ENCODE measurements at regions of chr2 and their contacts with region 1.

Region 1: GRCh38 chr2:42928692-42929545 is 136.5 kb upstream of the HAAO start:
- DNase-seq: peak; percentile 82 to 93 (median 91)
- H3K4me3 ChIP-seq: no peak overlapping the region
- H3K27ac ChIP-seq: peak overlapping the region; percentile 91 to 93
- H3K4me1 ChIP-seq: peaks cover 20 to 98% (median 97%) of the 10 kb centered on the region in 4 experiments
- H3K27me3 ChIP-seq: no peaks in the 10 kb centered on the region

Region 2: DNA sequence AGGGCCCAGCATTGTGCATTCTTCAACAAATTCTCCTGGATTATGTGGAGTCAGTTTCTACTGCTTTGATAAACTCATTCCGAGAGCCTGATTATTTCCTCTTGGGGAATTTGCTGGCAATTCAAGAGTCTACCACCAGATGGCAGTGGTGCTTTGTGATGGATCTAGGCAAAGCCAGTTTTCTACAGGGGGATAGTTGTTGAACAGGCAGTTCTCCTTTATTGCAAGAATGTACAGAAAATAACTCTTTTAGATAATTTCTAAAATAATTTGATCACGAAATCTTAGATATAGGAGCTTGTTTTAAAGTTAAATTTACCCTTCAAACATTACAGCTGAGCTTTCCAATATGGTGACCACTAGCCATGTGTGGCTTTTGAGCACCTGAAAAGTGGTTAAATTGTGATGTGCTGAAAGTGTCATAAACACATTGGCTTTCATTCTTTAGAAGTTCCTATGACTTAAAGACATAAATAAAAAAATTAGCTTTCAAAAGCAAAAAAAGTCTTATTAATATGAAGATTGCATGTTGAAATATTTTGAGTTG is 69.8 kb before region 1 on chr2:
- CTCF ChIA-PET with region 1: interaction called, 16 read pairs
- POLR2A ChIA-PET with region 1: interaction called, 3 read pairs
- DNase-seq: peak; percentile 84 to 93 (median 89)
- H3K4me3 ChIP-seq: no peak overlapping the region
- H3K27ac ChIP-seq: no peak overlapping the region
- H3K4me1 ChIP-seq: peaks cover 2 to 57% (median 45%) of the 10 kb centered on the region in 4 experiments
- H3K27me3 ChIP-seq: no peaks in the 10 kb centered on the region

Region 3: GRCh38 chr2:42901076-42901640 is 27.8 kb before region 1 on chr2:
- CTCF ChIA-PET with region 1: interaction called, 12 read pairs
- POLR2A ChIA-PET with region 1: no interaction called
- DNase-seq: no peak
- H3K4me3 ChIP-seq: no peak overlapping the region
- H3K27ac ChIP-seq: no peak overlapping the region
- H3K4me1 ChIP-seq: peaks cover 0 to 54% (median 28%) of the 10 kb centered on the region in 4 experiments
- H3K27me3 ChIP-seq: no peaks in the 10 kb centered on the region

Region 4: GRCh38 chr2:42906557-42907411 is 22.1 kb before region 1 on chr2:
- CTCF ChIA-PET with region 1: interaction called, 12 read pairs
- POLR2A ChIA-PET with region 1: interaction called, 3 read pairs
- DNase-seq: peak in 2 of 3 donors; percentile 40 to 63
- H3K4me3 ChIP-seq: peak overlapping the region in 1 of 7 experiments; percentile 46
- H3K27ac ChIP-seq: no peak overlapping the region
- H3K4me1 ChIP-seq: peaks cover 0 to 68% (median 35%) of the 10 kb centered on the region in 4 experiments
- H3K27me3 ChIP-seq: no peaks in the 10 kb centered on the region

Region 5: DNA sequence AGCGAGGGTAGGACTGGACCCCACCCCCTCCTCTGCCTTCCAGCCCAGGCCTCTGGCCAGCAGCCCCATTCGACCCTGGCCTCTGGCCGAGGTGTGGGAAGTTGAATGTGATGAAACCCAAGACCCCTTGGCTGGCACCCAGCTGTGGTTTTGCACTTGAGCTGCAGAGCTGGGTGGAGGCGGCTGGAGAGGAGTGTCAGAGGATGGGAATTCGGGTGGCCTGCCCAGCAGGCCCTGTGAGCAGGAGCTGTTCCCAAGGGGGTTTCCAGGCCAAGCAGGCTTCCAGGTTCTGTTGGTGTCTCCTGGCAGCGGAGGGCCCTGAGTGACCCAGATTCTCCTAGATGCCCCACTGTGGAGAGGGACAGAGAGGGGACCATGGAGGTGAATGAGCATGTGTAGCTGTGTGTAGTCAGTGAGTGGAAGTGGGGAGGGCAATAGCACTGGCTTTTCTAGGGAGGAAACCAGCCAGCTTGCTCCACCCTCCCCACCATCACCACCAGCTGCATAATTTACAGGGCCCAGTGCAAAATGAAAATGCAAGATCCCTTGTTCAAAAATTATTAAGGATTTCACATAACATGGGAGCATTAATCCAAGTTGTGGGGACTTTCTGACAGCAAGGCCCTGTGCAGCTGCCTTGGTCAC is 35.6 kb after region 1 on chr2:
- CTCF ChIA-PET with region 1: interaction called, 6 read pairs
- POLR2A ChIA-PET with region 1: interaction called, 12 read pairs
- DNase-seq: peak in 2 of 3 donors; percentile 65 to 69
- H3K4me3 ChIP-seq: peak overlapping the region in 2 of 7 experiments; percentile 35 to 58
- H3K27ac ChIP-seq: peak overlapping the region; percentile 88 to 91
- H3K4me1 ChIP-seq: peaks cover 35 to 99% (median 95%) of the 10 kb centered on the region in 4 experiments
- H3K27me3 ChIP-seq: no peaks in the 10 kb centered on the region

Region 6: DNA sequence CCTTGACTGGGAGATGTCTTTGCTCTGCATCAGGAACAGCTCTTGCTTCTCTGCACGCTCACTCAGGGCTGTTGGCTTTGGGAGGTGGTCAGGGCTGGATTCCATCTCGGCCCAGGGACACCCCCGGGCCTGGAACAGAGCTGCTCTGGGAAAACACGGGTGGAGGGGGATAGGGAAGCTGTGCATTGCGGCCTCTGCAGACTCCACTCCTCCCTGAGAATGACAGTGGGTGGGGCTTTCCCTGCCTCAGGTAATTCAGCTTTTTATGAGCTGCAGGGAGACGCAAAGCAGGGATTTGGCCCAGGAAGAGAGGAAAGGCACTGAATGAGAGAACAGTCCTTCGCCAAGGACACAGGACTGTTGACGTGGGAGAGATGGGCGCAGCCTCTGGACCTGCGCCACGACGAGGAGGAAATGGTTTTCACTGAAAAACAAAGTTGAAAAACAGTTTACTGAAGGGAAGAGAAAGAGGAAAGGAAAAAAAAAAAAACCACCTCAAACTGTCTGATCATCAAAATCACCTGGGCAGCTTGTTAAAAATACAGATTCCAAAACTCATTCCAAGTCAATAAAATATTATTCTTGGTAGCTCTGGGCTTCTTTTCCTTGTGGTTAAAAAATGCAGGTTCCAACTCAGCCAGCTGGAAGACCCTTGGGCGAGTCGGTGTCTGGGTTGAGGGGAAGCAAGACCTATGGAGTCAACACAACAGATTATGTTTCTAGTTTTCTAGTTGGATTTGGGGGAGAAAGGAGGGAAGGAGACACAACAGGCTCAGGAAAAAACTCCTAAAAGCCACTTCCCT is 103.5 kb after region 1 on chr2:
- CTCF ChIA-PET with region 1: no interaction called
- POLR2A ChIA-PET with region 1: no interaction called
- DNase-seq: no peak
- H3K4me3 ChIP-seq: no peak overlapping the region
- H3K27ac ChIP-seq: no peak overlapping the region
- H3K4me1 ChIP-seq: peaks cover 0 to 16% (median 7%) of the 10 kb centered on the region in 4 experiments
- H3K27me3 ChIP-seq: no peaks in the 10 kb centered on the region

Region 7: DNA sequence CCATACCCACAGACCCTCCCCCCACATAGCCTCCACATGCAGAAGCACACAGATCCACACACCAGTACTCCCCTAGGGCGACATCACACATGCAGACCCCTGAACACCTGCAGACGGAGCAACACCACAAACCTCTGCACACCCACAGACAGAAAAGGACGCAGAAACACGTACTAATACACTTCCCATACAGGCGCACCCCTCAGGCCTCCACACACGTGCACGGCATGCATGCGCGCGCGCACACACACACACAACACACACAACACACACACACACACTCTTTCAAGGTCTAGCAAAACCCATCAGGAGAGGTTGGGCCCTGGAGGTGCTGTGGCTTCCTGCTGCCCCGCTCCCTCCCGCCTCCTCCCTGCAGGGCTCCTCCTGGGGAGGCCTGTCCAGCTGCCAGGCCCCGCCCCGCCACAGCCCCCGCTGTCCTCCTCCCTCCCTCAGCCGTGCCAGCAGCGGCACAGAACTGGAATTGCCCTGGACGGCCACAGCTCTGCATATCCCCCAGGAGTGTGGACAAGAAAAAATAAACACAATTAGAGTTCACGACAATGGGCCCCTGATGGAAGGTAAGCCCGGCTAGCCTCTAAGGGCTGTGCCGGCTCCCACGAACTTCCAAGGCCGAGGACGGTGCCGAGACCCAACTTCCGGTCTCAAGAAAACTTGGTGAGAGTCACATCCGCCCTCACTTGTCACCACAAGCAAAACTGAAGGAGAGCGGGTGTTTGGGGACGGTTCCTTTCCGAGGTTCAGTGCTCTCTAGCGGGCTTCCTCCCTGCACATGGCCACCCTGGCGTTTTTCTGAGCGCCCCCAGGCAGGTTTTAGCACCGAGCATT is 290.7 kb after region 1 on chr2:
- CTCF ChIA-PET with region 1: interaction called, 11 read pairs
- POLR2A ChIA-PET with region 1: interaction called, 3 read pairs
- DNase-seq: peak; percentile 91 to 95 (median 94)
- H3K4me3 ChIP-seq: peak overlapping the region in 6 of 7 experiments; percentile 89 to 100 (median 98)
- H3K27ac ChIP-seq: peak overlapping the region; percentile 81 to 91
- H3K4me1 ChIP-seq: peaks cover 27 to 61% (median 48%) of the 10 kb centered on the region in 4 experiments
- H3K27me3 ChIP-seq: no peaks in the 10 kb centered on the region

Measured in common myeloid progenitor, CD34-positive (primary cell).